ENCODE measurements at regions of chr16 and their contacts with region 1.

Region 1: GRCh38 chr16:68040507-68041288 is 17.6 kb downstream of the DUS2 start:
- DNase-seq: peak; percentile 93
- ATAC-seq: peak; percentile 99
- H3K4me3 Mint-ChIP-seq: no peak overlapping the region
- H3K27ac Mint-ChIP-seq: peak overlapping the region; percentile 69
- H3K4me1 Mint-ChIP-seq: peaks cover 26% of the 10 kb centered on the region
- H3K27me3 Mint-ChIP-seq: no peaks in the 10 kb centered on the region

Region 2: GRCh38 chr16:67942200-67942509 is 98.5 kb before region 1 on chr16:
- CTCF ChIA-PET with region 1: interaction called, 27 read pairs
- POLR2A ChIA-PET with region 1: interaction called, 12 read pairs
- DNase-seq: peak; percentile 54
- ATAC-seq: peak; percentile 44
- H3K4me3 Mint-ChIP-seq: no peak overlapping the region
- H3K27ac Mint-ChIP-seq: peak overlapping the region; percentile 17
- H3K4me1 Mint-ChIP-seq: peaks cover 36% of the 10 kb centered on the region
- H3K27me3 Mint-ChIP-seq: no peaks in the 10 kb centered on the region

Region 3: GRCh38 chr16:67993189-67994039 is 47.3 kb before region 1 on chr16:
- CTCF ChIA-PET with region 1: interaction called, 30 read pairs
- POLR2A ChIA-PET with region 1: interaction called, 3 read pairs
- DNase-seq: peak; percentile 89
- ATAC-seq: peak; percentile 93
- H3K4me3 Mint-ChIP-seq: peak overlapping the region; percentile 78
- H3K27ac Mint-ChIP-seq: peak overlapping the region; percentile 97
- H3K4me1 Mint-ChIP-seq: peaks cover 42% of the 10 kb centered on the region
- H3K27me3 Mint-ChIP-seq: no peaks in the 10 kb centered on the region

Region 4: DNA sequence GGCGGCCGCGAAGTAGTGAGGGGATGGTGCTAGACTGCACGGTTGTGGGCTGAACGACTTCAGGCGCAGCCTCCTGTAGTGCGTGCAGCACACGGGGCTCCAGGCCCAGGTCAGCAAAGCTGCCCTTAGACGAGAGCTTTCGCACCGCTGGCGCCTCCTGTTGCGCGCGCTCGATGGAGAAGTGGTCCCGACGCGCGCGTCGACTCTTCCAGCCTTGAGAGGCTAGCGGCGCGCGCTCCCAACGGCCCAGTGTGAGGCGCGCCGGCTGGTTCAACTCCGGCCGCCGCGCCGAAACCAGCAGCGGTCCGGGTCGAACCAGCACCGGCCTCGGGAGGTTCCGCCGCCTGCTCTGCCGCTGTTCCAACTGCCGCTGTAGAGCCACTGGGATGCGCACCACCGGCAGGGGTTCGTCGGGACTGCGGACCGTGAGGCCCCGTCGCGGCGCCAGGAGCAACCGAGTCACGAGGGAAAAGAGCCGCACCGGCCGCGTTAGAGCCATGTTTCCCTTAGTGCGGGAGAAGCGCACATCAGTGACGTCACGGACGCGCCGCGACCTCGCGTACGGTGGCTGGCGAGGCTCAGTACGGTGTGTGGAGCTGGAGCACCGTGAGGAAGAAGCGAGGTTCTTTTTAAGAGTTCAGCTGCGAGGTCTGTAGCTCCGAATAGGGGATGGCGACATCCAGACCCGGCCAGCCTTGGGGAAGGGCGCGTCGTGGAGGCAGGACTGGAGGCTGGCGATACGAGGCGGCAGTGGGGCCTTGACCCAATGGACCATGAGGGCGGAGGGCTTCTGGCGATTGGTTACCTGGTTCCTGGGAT is 17.8 kb before region 1 on chr16 and contains the starts of genes DDX28 and DUS2:
- CTCF ChIA-PET with region 1: interaction called, 16 read pairs
- POLR2A ChIA-PET with region 1: interaction called, 5 read pairs
- DNase-seq: peak; percentile 95
- ATAC-seq: peak; percentile 92
- H3K4me3 Mint-ChIP-seq: peak within 1 kb of the TSS; percentile 94
- H3K27ac Mint-ChIP-seq: peak within 1 kb of the TSS; percentile 95
- H3K4me1 Mint-ChIP-seq: peaks cover 29% of the 10 kb centered on the region
- H3K27me3 Mint-ChIP-seq: no peaks in the 10 kb centered on the region
- total RNA-seq, gene DDX28: 13.6 to 13.9 TPM
- total RNA-seq, gene DUS2: 24.1 to 25.2 TPM

Region 5: DNA sequence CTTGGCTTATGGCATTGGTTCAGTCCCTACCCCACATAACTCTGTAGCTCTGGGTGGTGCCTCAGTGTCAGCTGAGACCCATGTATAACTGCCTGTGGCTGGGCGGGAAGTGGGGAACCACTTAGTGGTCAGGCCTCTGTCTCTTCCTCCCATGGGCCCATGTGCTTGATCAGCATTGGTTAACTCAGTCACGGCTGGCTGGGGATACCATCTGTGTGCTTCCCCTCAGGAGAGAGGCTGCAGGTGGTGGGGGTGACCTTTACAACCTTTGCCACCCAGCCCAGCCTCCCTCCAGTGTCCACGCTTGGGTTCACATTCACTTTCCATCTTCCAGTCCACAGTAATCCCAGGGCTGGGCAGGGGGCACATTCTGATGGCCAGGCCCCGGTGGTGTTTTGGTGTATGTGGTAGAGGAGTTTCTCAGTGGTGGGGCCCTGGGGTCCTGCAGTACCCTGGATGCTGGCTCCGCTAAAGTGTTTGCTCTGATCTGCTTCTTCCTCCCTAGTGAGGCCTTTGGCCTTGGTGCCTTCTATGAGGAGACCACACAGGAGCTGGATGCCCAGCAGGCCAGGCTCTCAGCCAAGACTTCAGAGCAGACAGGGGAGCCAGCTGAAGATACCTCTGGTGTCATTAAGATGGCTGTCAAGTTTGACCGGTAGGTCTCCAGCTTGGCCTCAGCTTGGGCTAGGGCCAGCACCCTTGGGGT is 34.3 kb after region 1 on chr16:
- CTCF ChIA-PET with region 1: interaction called, 13 read pairs
- POLR2A ChIA-PET with region 1: interaction called, 4 read pairs
- DNase-seq: peak; percentile 95
- ATAC-seq: peak; percentile 81
- H3K4me3 Mint-ChIP-seq: peak overlapping the region; percentile 57
- H3K27ac Mint-ChIP-seq: peak overlapping the region; percentile 89
- H3K4me1 Mint-ChIP-seq: peaks cover 89% of the 10 kb centered on the region
- H3K27me3 Mint-ChIP-seq: no peaks in the 10 kb centered on the region

Measured in activated CD8-positive, alpha-beta T cell treated with anti-CD3 and anti-CD28 coated beads, Interleukin-2, amount 10 ng/mL, durations not matched to agents 7 days and 5 days (primary cell).